HepG2 (cell line): ENCODE measurements at regions of chr19 and their contacts with region 1.

Region 1: GRCh38 chr19:4375164-4376027 is 25.0 kb downstream of the SH3GL1 start:
- DNase-seq: peak; percentile 75
- ATAC-seq: peak; percentile 61
- H3K4me3 ChIP-seq: peak overlapping the region in 1 of 3 experiments; percentile 53; a peak in 2 of 6 replicates
- H3K27ac ChIP-seq: peak overlapping the region; percentile 84
- H3K4me1 ChIP-seq: peaks cover 42% of the 10 kb centered on the region
- H3K27me3 ChIP-seq: no peaks in the 10 kb centered on the region
- CTCF ChIP-seq: peak; percentile 45
- EP300 ChIP-seq: no peak
- POLR2A ChIP-seq: no peak
- RAD21 ChIP-seq: no peak

Region 2: DNA sequence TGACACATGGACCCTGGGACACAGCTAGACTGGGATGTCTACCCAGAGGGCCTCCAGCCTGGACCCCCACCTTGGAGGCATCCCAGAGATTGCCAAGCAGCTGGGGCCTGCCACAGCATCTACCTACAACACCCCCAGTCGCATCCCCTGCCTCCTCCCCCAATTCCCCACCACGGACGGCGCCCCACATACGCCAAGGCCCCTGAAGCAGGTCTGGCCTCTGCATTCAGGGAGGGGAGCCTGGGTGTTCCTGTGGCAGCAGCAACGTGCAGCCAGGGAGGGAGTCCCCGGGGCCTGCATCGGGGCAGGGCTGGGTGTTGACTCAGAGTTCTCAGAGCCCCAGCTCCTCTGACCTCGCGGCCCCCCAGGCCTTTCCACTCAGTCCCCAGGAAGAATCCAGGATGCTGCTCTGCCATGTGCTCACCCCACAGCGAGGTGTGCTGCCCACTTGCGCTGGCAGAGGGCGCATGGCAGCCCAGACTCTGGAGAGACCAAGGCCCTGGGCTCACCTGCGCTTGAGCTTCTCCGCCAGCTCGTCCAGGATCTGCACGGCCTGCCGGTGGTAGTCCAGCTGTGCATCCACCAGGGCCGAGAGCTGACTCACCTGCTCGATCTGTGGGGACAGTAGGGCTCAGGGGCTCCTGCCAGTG is 12.4 kb before region 1 on chr19:
- CTCF ChIA-PET with region 1: no interaction called
- POLR2A ChIA-PET with region 1: interaction called, 11 read pairs
- in situ Hi-C with region 1: no loop called
- intact Hi-C with region 1: no loop called
- DNase-seq: no peak
- ATAC-seq: peak; percentile 9
- H3K4me3 ChIP-seq: no peak overlapping the region
- H3K27ac ChIP-seq: no peak overlapping the region
- H3K4me1 ChIP-seq: no peaks in the 10 kb centered on the region
- H3K27me3 ChIP-seq: no peaks in the 10 kb centered on the region
- CTCF ChIP-seq: peak; percentile 56
- EP300 ChIP-seq: no peak
- POLR2A ChIP-seq: no peak; a peak in 1 of 4 replicates
- RAD21 ChIP-seq: no peak

Region 3: DNA sequence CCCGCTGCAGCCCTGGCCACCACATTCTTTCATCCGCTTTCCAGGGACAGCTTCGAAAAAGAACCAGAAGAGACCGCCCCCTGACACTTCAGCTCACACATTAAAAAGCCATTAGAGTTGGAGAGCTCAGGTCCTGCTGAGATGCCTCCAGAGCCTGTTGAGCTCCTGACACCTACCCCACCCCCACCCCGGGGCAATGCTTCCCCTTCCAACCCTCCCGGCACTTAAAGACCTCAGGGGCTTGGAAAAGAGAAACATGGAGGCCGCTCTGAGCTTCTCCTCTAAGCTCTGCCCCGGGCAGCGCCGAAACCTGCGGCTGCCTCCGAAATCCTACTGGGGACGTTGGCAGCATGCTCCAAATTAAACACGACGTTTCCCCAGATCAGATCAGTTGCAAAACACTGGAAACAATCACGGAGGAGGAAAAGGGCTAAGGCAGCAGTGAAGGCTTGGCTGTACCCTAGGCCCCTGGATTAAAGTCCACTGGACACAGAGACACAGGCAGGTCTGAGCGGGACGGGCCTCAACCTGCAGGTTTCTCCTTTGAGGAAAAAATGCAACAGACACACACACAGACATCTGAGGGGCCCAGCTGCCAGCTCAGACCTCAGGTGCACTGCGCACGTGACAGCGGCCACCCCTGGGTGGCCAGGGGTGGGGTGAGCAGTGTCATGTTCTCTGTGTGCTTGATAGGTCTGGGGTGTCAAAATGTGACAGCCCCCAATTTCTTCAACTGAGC is 15.3 kb after region 1 on chr19:
- CTCF ChIA-PET with region 1: no interaction called
- POLR2A ChIA-PET with region 1: interaction called, 64 read pairs
- in situ Hi-C with region 1: no loop called
- intact Hi-C with region 1: no loop called
- DNase-seq: peak; percentile 91
- ATAC-seq: peak; percentile 83
- H3K4me3 ChIP-seq: peak overlapping the region; percentile 34 to 60 (median 40); a peak in 5 of 6 replicates
- H3K27ac ChIP-seq: peak overlapping the region; percentile 95
- H3K4me1 ChIP-seq: peaks cover 86% of the 10 kb centered on the region
- H3K27me3 ChIP-seq: no peaks in the 10 kb centered on the region
- CTCF ChIP-seq: no peak
- EP300 ChIP-seq: peak; percentile 66 to 70; a peak in 2 of 4 replicates
- POLR2A ChIP-seq: peak; percentile 39 to 70; a peak in 3 of 4 replicates
- RAD21 ChIP-seq: peak; percentile 50

Region 4: DNA sequence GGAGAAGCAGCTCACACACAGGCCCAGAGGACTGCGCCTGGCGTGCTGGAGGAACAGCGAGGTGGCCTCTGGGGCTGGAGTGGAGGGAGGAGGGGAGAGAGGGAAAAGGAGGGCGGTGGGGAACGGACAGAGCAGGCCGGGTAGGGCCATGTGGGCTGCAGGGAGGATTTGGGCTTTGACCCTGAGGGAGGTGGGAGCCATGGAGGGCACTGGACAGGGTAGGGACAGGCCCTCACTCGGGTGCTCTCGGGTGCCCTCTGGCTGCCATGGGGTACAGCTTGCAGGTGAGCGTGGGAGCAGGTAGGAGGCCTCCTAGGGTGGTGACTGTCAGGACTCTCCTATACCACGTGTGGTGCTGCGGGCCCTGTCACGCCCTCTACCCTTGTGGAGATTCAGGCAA is 120.1 kb after region 1 on chr19:
- CTCF ChIA-PET with region 1: no interaction called
- POLR2A ChIA-PET with region 1: no interaction called
- in situ Hi-C with region 1: no loop called
- intact Hi-C with region 1: no loop called
- DNase-seq: no peak
- ATAC-seq: peak; percentile 68
- H3K4me3 ChIP-seq: no peak overlapping the region
- H3K27ac ChIP-seq: no peak overlapping the region
- H3K4me1 ChIP-seq: no peaks in the 10 kb centered on the region
- H3K27me3 ChIP-seq: no peaks in the 10 kb centered on the region; a peak in 1 of 5 replicates
- CTCF ChIP-seq: peak; percentile 47
- EP300 ChIP-seq: no peak
- POLR2A ChIP-seq: no peak
- RAD21 ChIP-seq: no peak